WTC11 (cell line): ENCODE measurements at regions of chr15 and their contacts with region 1.

Region 1: GRCh38 chr15:69413822-69414700 is at the start of gene KIF23:
- DNase-seq: peak; percentile 93
- ATAC-seq: peak; percentile 94
- H3K4me3 Mint-ChIP-seq: peak within 1 kb of the TSS; percentile 91
- H3K27ac Mint-ChIP-seq: peak within 1 kb of the TSS; percentile 80
- H3K4me1 Mint-ChIP-seq: peaks cover 17% of the 10 kb centered on the region
- H3K27me3 Mint-ChIP-seq: no peaks in the 10 kb centered on the region; the same call in 1 of the 2 replicates
- CTCF ChIP-seq: no peak
- total RNA-seq, gene KIF23: 59.6 to 87.8 TPM (median 62.0 TPM) in 3 replicates

Region 2: GRCh38 chr15:69462493-69463181 is 48.6 kb after region 1 on chr15:
- CTCF ChIA-PET with region 1: interaction called, 21 read pairs
- POLR2A ChIA-PET with region 1: interaction called, 8 read pairs
- DNase-seq: peak; percentile 98
- ATAC-seq: peak; percentile 90
- H3K4me3 Mint-ChIP-seq: peak overlapping the region; percentile 75
- H3K27ac Mint-ChIP-seq: peak overlapping the region; percentile 96
- H3K4me1 Mint-ChIP-seq: peaks cover 16% of the 10 kb centered on the region
- H3K27me3 Mint-ChIP-seq: no peaks in the 10 kb centered on the region
- CTCF ChIP-seq: peak; percentile 69